Endothelial cell of umbilical vein (primary cell): ENCODE measurements at regions of chr6 and their contacts with region 1.

Region 1: DNA sequence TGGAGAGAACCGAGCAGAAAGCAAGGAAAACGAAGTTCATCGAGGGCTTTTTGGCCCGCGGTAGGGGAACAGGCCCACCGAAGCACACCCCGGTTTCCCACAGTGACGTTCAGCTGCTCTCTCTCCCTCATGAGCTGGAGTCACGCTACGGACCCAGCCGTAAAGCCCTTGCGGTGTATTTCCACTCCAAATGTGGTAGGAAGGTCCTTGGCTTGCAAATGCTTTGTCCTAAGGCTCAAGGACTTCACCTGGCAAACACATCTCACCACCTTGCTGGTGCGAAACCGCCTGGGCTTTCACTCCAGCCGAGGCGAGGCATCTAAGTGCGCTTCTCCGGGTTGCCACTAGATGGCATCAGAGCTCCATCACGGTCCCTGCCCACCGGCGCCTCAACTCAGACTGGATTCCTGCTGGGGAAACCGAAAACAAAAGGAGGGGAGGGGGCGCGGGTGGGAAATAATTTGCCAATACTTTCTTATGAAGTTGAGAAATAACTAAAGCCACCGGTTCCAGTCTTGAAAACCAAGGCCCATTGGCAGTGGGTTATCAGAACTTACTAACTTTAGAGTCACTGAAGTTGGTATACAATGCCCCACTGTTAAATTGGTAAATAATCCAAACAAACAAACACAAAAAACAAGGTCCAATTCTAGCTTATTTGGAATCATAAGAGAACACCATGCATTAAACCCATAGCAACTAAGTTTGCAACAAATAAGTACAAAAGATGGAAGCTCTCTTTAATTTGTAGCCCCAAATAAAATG is 13.4 kb upstream of the FOXC1 start:
- DNase-seq: peak; percentile 58
- H3K4me3 ChIP-seq: no peak overlapping the region
- H3K27ac ChIP-seq: no peak overlapping the region
- H3K4me1 ChIP-seq: no peaks in the 10 kb centered on the region
- H3K27me3 ChIP-seq: peaks cover 1 to 2% of the 10 kb centered on the region in 2 experiments
- CTCF ChIP-seq: peak; percentile 81 to 93
- POLR2A ChIP-seq: no peak

Region 2: GRCh38 chr6:1390133-1390804 is 206.0 kb before region 1 on chr6:
- CTCF ChIA-PET with region 1: no interaction called
- POLR2A ChIA-PET with region 1: no interaction called
- dilution Hi-C with region 1: no loop called
- intact Hi-C with region 1: no loop called
- DNase-seq: peak; percentile 18
- H3K4me3 ChIP-seq: no peak overlapping the region
- H3K27ac ChIP-seq: no peak overlapping the region
- H3K4me1 ChIP-seq: no peaks in the 10 kb centered on the region
- H3K27me3 ChIP-seq: peaks cover 81 to 91% of the 10 kb centered on the region in 2 experiments
- CTCF ChIP-seq: no peak
- POLR2A ChIP-seq: no peak

Region 3: GRCh38 chr6:1515280-1515679 is 81.0 kb before region 1 on chr6:
- CTCF ChIA-PET with region 1: no interaction called
- POLR2A ChIA-PET with region 1: no interaction called
- dilution Hi-C with region 1: no loop called
- intact Hi-C with region 1: no loop called
- DNase-seq: no peak
- H3K4me3 ChIP-seq: no peak overlapping the region
- H3K27ac ChIP-seq: no peak overlapping the region
- H3K4me1 ChIP-seq: no peaks in the 10 kb centered on the region
- H3K27me3 ChIP-seq: no peaks in the 10 kb centered on the region
- CTCF ChIP-seq: no peak
- POLR2A ChIP-seq: no peak

Region 4: DNA sequence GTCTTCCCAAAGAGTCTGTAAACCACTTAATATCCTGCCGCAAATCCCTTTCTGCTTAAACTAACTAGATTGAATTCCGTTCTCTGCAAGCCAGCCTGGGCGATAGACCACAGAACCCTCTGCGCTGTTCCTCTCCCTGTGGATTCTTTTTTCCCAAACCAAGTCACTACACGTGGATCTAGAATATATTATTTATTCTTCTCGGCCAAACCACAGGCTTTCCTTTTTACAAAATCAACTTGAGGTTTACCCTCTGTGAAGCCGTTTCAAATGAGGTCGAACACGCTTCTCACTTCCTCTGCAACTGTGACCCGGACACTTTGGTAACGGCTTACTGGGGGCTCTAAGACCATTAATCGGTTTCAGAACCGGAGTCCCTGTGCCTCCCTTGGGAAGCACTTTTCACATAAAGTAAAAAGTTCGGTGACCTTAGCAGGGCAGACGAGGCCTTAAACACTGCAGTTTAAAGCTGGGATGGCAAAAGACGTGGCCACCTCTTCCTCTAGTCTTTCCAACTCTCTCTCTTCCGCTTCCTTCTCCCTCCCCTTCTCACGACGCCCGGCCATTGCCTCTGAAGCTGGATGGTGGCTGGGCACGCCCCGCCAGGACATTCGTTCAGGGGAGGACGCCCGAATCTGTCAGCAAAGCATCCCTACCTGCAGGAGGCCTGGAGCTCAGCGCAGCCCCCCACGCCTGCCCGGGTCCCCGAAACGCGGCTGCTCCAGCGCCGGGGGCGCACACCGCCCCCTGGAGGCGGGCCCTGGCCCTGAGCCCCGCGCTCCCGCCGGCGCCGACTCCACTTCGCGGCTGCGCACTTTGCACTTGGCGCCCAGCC is 41.6 kb before region 1 on chr6:
- CTCF ChIA-PET with region 1: no interaction called
- POLR2A ChIA-PET with region 1: no interaction called
- dilution Hi-C with region 1: no loop called
- intact Hi-C with region 1: no loop called
- DNase-seq: peak; percentile 56
- H3K4me3 ChIP-seq: peak overlapping the region; percentile 23 to 61 (median 35)
- H3K27ac ChIP-seq: no peak overlapping the region
- H3K4me1 ChIP-seq: peaks cover 2% of the 10 kb centered on the region
- H3K27me3 ChIP-seq: no peaks in the 10 kb centered on the region
- CTCF ChIP-seq: peak; percentile 80 to 98
- POLR2A ChIP-seq: no peak

Region 5: GRCh38 chr6:2448820-2449571 is 852.7 kb after region 1 on chr6:
- CTCF ChIA-PET with region 1: interaction called, 37 read pairs
- POLR2A ChIA-PET with region 1: no interaction called
- dilution Hi-C with region 1: no loop called
- intact Hi-C with region 1: loop called (anchors 1 kb)
- DNase-seq: peak; percentile 86
- H3K4me3 ChIP-seq: peak overlapping the region in 2 of 3 experiments; percentile 4 to 64
- H3K27ac ChIP-seq: no peak overlapping the region
- H3K4me1 ChIP-seq: peaks cover 4% of the 10 kb centered on the region
- H3K27me3 ChIP-seq: peaks cover under 1 to 2% of the 10 kb centered on the region in 2 experiments
- CTCF ChIP-seq: peak; percentile 60 to 69
- POLR2A ChIP-seq: no peak

Region 6: GRCh38 chr6:2695454-2696095 is 1099.3 kb after region 1 on chr6:
- CTCF ChIA-PET with region 1: interaction called, 5 read pairs
- POLR2A ChIA-PET with region 1: no interaction called
- dilution Hi-C with region 1: no loop called
- intact Hi-C with region 1: loop called (anchors 2 kb)
- DNase-seq: peak; percentile 55
- H3K4me3 ChIP-seq: no peak overlapping the region
- H3K27ac ChIP-seq: no peak overlapping the region
- H3K4me1 ChIP-seq: no peaks in the 10 kb centered on the region
- H3K27me3 ChIP-seq: peaks cover 0 to 4% of the 10 kb centered on the region in 2 experiments
- CTCF ChIP-seq: no peak
- POLR2A ChIP-seq: no peak

Region 7: DNA sequence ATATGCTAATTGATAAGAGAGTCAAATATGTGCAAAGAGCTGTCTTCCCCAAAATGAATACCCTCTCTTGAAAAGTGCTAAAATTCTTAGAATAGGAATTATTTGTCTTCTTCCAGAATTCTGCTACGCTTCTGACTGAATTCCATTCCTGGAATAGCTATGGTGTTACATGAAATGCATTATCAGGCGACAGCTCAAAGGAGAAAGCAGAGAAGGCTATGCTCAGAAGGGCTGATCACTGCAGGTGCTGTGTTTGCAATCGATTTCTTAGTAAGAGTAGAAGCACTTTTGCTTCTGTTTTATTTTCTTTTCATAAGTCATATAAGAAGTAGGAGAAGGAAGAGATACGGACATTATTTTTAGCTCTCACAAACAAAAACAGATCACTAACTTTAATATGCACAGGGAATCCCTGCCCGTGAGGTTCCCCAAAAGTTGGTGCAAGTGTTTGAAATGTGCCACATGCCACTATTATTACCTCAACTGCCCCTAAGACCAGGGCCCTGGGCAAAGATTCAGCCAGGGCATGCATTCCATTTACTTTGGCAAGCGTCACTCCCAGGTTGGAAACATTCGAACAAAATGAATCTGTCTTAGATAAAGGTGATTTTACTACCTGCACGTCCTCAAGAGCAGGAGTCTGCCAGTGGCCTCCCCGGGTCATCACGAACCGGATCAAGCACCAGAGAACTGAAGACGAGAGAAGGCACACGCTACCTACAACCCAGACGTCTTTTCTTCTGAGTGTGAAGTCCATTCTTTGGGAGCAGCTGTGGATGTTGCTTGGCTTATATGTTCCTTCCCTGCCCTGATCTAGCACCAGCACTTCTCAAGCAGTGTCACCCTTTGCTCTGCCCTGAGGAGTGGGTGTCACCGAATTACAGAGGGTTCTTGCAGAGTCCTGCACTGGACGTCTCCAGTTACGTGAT is 1147.3 kb after region 1 on chr6:
- CTCF ChIA-PET with region 1: interaction called, 109 read pairs
- POLR2A ChIA-PET with region 1: no interaction called
- dilution Hi-C with region 1: no loop called
- intact Hi-C with region 1: no loop called
- DNase-seq: no peak
- H3K4me3 ChIP-seq: no peak overlapping the region
- H3K27ac ChIP-seq: no peak overlapping the region
- H3K4me1 ChIP-seq: no peaks in the 10 kb centered on the region
- H3K27me3 ChIP-seq: no peaks in the 10 kb centered on the region
- CTCF ChIP-seq: no peak
- POLR2A ChIP-seq: no peak

Region 8: DNA sequence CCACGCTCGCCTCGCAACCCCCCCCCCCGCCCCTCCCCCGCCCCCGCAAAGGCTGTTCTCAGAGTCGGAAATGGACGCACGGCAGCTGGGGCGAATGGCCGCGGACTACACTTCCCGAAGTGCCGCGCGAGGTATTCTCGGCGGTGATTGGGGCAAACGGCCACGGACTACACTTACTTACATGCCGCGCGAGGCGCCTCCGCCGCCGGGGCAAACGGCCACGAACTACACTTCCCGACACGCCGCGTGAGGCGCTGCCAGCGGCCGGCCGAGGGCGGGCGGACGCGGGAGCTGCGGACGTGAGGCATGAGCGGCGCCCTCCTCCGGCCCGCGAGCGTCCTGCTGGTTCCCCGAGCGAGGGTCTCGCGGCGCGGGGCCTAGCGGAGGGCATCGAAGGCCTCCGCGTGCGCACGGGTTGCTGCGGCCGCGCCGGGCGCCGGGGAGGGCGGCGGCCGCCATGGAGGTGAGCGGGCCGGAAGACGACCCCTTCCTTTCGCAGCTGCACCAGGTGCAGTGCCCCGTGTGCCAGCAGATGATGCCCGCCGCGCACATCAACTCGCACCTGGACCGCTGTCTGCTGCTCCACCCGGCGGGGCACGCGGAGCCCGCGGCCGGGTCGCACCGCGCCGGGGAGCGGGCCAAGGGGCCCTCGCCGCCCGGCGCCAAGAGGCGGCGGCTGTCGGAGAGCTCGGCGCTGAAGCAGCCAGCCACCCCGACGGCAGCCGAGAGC is 1169.1 kb after region 1 on chr6 and contains the start of gene WRNIP1:
- CTCF ChIA-PET with region 1: interaction called, 15 read pairs
- POLR2A ChIA-PET with region 1: no interaction called
- dilution Hi-C with region 1: no loop called
- intact Hi-C with region 1: no loop called
- DNase-seq: peak; percentile 99
- H3K4me3 ChIP-seq: peak within 1 kb of the TSS; percentile 72 to 98 (median 97)
- H3K27ac ChIP-seq: peak within 1 kb of the TSS; percentile 79
- H3K4me1 ChIP-seq: peaks cover 40% of the 10 kb centered on the region
- H3K27me3 ChIP-seq: no peaks in the 10 kb centered on the region
- CTCF ChIP-seq: peak; percentile 65 to 66
- POLR2A ChIP-seq: no peak
- total RNA-seq, gene WRNIP1: 47.7 and 50.1 TPM in 2 replicates